GM10248 (cell line): ENCODE measurements at regions of chr5 and their contacts with region 1.

Region 1: GRCh38 chr5:136364307-136364706 is 1.0 kb downstream of the TRPC7 start:
- DNase-seq: no peak
- CTCF ChIP-seq: no peak

Region 2: DNA sequence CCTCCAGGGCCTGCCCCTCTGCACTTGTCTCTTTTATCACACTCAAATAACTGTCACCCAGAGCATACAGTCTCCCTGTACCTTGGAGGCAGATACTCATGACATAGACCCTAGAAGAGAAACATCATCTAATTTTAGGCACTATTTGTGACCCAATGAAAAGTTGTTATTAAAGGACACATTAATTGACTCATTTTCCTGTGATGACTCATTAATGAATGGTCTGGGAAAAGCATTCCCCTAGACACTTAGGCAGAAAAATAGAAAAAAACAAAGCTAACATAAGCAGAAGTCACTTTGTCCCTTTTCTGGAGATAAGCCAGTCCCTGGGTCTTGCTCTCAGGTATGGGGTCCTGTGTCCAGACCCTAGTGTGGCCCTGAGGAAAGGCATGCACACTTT is 14.0 kb before region 1 on chr5:
- CTCF ChIA-PET with region 1: interaction called, 10 read pairs
- POLR2A ChIA-PET with region 1: no interaction called
- DNase-seq: no peak
- CTCF ChIP-seq: no peak

Region 3: DNA sequence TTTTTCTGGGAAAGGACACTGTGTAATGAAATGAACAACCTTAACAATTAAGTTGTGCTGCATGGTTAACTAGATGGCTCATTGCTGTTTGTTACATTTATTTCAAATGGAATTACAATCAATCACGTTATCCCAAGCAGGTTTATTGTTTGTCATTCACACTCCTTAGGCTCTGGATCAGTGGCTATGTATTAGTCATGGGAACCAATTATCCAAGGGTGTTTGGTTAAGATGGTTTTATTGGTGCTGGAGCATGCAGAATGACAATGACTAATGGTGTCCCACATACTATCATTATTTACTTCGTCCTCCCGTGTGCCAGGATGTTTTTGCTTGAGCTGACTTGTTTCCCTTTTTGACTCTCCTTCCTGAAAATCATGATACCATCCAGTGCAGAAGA is 11.6 kb after region 1 on chr5:
- CTCF ChIA-PET with region 1: no interaction called
- POLR2A ChIA-PET with region 1: no interaction called
- DNase-seq: no peak
- CTCF ChIP-seq: no peak

Region 4: GRCh38 chr5:136769900-136770684 is 405.8 kb after region 1 on chr5:
- CTCF ChIA-PET with region 1: interaction called, 11 read pairs
- POLR2A ChIA-PET with region 1: no interaction called
- DNase-seq: peak; percentile 68
- CTCF ChIP-seq: peak; percentile 76